PC-3 (cell line): ENCODE measurements at regions of chr10 and their contacts with region 1.

Region 1: GRCh38 chr10:54800741-54801421 is at the start of gene PCDH15:
- DNase-seq: peak; percentile 80
- ATAC-seq: peak; percentile 80
- H3K4me3 ChIP-seq: peak within 1 kb of the TSS; percentile 34; the same call in 1 of the 2 replicates
- H3K27ac ChIP-seq: no peak within 1 kb of the TSS
- H3K4me1 ChIP-seq: peaks cover 27% of the 10 kb centered on the region
- H3K27me3 ChIP-seq: no peaks in the 10 kb centered on the region
- CTCF ChIP-seq: peak; percentile 88
- total RNA-seq, gene PCDH15: not detected in 2 replicates

Region 2: GRCh38 chr10:54133203-54133602 is 667.7 kb before region 1 on chr10:
- CTCF ChIA-PET with region 1: interaction called, 4 read pairs
- POLR2A ChIA-PET with region 1: no interaction called
- intact Hi-C with region 1: loop called (anchors 5 kb)
- DNase-seq: peak; percentile 54
- ATAC-seq: peak; percentile 63
- H3K4me3 ChIP-seq: no peak overlapping the region
- H3K27ac ChIP-seq: no peak overlapping the region
- H3K4me1 ChIP-seq: no peaks in the 10 kb centered on the region
- H3K27me3 ChIP-seq: no peaks in the 10 kb centered on the region
- CTCF ChIP-seq: peak; percentile 91

Region 3: DNA sequence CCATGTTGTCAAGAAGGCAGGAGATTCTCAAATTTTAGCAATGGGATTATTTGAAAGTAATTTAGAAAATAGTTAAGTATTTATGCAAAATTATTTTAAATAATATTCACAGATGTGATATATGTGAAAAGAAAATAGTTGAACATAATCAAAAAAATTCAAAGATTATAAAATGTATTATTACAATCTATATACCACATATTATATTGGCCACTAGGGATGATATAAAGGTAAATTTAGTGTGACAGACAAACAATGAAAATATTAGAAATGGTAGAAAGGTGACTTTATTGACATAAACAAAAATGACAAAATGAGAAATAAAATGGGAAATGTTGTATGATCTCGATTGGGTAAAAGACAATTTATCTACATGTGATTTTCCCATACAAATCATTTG is 385.4 kb before region 1 on chr10:
- CTCF ChIA-PET with region 1: interaction called, 3 read pairs
- POLR2A ChIA-PET with region 1: no interaction called
- intact Hi-C with region 1: loop called (anchors 5 kb)
- DNase-seq: peak; percentile 36
- ATAC-seq: peak; percentile 35; the same call in 1 of the 2 replicates
- H3K4me3 ChIP-seq: no peak overlapping the region
- H3K27ac ChIP-seq: no peak overlapping the region
- H3K4me1 ChIP-seq: no peaks in the 10 kb centered on the region
- H3K27me3 ChIP-seq: no peaks in the 10 kb centered on the region
- CTCF ChIP-seq: peak; percentile 55

Region 4: GRCh38 chr10:54585572-54585971 is 215.3 kb before region 1 on chr10:
- CTCF ChIA-PET with region 1: interaction called, 3 read pairs
- POLR2A ChIA-PET with region 1: interaction called, 15 read pairs
- intact Hi-C with region 1: loop called (anchors 10 kb)
- DNase-seq: no peak
- ATAC-seq: no peak
- H3K4me3 ChIP-seq: no peak overlapping the region
- H3K27ac ChIP-seq: no peak overlapping the region
- H3K4me1 ChIP-seq: peaks cover 23% of the 10 kb centered on the region
- H3K27me3 ChIP-seq: no peaks in the 10 kb centered on the region
- CTCF ChIP-seq: no peak

Region 5: GRCh38 chr10:54614072-54614471 is 186.8 kb before region 1 on chr10:
- CTCF ChIA-PET with region 1: interaction called, 3 read pairs
- POLR2A ChIA-PET with region 1: no interaction called
- intact Hi-C with region 1: loop called (anchors 5 kb)
- DNase-seq: no peak
- ATAC-seq: no peak
- H3K4me3 ChIP-seq: no peak overlapping the region
- H3K27ac ChIP-seq: no peak overlapping the region
- H3K4me1 ChIP-seq: peaks cover 10% of the 10 kb centered on the region
- H3K27me3 ChIP-seq: no peaks in the 10 kb centered on the region
- CTCF ChIP-seq: no peak

Region 6: GRCh38 chr10:54722075-54722474 is 78.8 kb before region 1 on chr10:
- CTCF ChIA-PET with region 1: no interaction called
- POLR2A ChIA-PET with region 1: no interaction called
- intact Hi-C with region 1: no loop called
- DNase-seq: no peak
- ATAC-seq: no peak
- H3K4me3 ChIP-seq: no peak overlapping the region
- H3K27ac ChIP-seq: no peak overlapping the region
- H3K4me1 ChIP-seq: no peaks in the 10 kb centered on the region
- H3K27me3 ChIP-seq: no peaks in the 10 kb centered on the region
- CTCF ChIP-seq: no peak

Region 7: GRCh38 chr10:54769051-54769450 is 31.8 kb before region 1 on chr10:
- CTCF ChIA-PET with region 1: no interaction called
- POLR2A ChIA-PET with region 1: no interaction called
- intact Hi-C with region 1: no loop called
- DNase-seq: no peak
- ATAC-seq: no peak
- H3K4me3 ChIP-seq: no peak overlapping the region
- H3K27ac ChIP-seq: no peak overlapping the region
- H3K4me1 ChIP-seq: no peaks in the 10 kb centered on the region
- H3K27me3 ChIP-seq: no peaks in the 10 kb centered on the region
- CTCF ChIP-seq: no peak

Region 8: DNA sequence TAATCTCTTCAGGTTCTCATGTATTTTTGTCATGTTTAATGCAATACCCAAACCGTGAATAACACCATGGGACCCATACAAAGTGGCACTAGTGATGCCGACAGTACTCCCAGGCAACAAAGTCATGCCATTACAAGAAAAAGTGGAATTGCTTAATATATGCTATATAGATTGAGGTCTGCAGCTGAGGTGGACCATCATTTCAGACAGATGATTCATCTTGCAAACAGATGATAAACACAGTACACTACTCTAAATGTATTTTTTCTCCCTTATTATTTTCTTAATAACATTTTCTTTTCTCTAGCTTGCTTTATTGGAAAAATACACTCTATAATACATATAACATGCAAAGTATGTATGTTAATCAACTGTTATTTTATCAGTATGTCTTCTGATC is 14.7 kb after region 1 on chr10:
- CTCF ChIA-PET with region 1: interaction called, 5 read pairs
- POLR2A ChIA-PET with region 1: interaction called, 3 read pairs
- intact Hi-C with region 1: loop called (anchors 2 kb)
- DNase-seq: peak; percentile 39
- ATAC-seq: peak; percentile 94
- H3K4me3 ChIP-seq: no peak overlapping the region
- H3K27ac ChIP-seq: no peak overlapping the region
- H3K4me1 ChIP-seq: peaks cover 9% of the 10 kb centered on the region; the same call in 1 of the 2 replicates
- H3K27me3 ChIP-seq: no peaks in the 10 kb centered on the region
- CTCF ChIP-seq: no peak

Region 9: DNA sequence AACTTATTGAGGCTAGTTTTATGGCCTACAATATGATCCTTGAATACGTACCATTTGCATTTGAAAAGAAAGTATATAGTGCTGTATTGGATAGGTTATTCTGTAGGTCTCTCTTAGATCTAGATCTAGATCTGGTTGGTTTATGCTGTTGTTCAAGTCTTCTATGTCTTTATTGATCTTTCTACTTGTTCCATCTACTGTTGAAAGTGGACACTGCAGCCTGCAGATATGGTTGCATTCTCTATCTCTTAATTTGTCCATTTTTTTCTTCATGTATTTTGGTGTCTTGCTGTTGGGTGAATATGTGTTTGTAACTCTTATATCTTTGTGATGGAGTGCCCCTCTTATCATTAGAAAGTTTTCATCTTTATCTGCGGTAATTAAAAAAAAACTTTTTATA is 139.5 kb after region 1 on chr10:
- CTCF ChIA-PET with region 1: no interaction called
- POLR2A ChIA-PET with region 1: no interaction called
- intact Hi-C with region 1: loop called (anchors 1 kb)
- DNase-seq: peak; percentile 17
- ATAC-seq: peak; percentile 82
- H3K4me3 ChIP-seq: no peak overlapping the region
- H3K27ac ChIP-seq: no peak overlapping the region
- H3K4me1 ChIP-seq: no peaks in the 10 kb centered on the region
- H3K27me3 ChIP-seq: no peaks in the 10 kb centered on the region
- CTCF ChIP-seq: peak; percentile 54

Region 10: GRCh38 chr10:55158633-55159032 is 357.8 kb after region 1 on chr10:
- CTCF ChIA-PET with region 1: no interaction called
- POLR2A ChIA-PET with region 1: no interaction called
- intact Hi-C with region 1: no loop called
- DNase-seq: no peak
- ATAC-seq: no peak
- H3K4me3 ChIP-seq: no peak overlapping the region
- H3K27ac ChIP-seq: no peak overlapping the region
- H3K4me1 ChIP-seq: no peaks in the 10 kb centered on the region
- H3K27me3 ChIP-seq: no peaks in the 10 kb centered on the region
- CTCF ChIP-seq: no peak